ENCODE measurements at regions of chr2 and their contacts with region 1.

Region 1: DNA sequence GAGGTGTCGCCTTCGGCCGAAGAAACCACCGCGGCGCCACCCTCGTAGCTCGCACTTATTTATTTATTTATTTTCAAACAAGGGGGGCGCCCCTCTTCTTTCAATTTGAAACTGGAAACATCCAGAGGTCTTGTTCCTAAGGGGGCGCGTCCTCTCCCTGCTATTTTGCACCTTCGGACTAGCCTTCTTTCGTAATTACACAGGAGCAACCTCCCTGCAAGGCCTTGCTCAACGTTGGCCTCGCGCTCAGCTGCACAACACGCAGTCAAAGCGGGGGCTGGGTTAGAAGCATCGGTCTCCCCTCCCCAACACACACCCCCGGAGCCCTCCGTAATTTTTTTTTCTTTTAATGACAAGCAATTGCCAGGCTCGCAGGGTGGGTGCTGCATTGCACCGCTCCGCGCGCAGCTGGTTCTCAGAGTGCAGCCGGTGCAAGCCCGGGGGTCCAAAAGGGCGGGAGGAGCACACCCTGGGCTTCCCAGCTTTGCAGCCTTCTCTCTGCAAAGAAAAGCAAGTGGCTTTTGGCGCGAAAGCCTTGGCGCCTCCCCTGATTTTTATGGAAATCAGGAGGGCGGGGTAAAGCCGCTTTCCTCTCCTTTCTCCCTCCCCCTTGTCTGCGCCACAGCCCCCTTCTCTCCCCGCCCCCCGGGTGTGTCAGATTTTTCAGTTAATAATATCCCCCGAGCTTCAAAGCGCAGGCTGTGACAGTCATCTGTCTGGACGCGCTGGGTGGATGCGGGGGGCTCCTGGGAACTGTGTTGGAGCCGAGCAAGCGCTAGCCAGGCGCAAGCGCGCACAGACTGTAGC is at the start of gene MYCN:
- DNase-seq: peak; percentile 74 to 89
- H3K4me3 ChIP-seq: peak within 1 kb of the TSS; percentile 86 to 97 (median 94)
- H3K27ac ChIP-seq: peak within 1 kb of the TSS; percentile 80
- H3K4me1 ChIP-seq: peaks cover 6 to 23% (median 14%) of the 10 kb centered on the region in 4 experiments; a peak in 5 of 7 replicates
- H3K27me3 ChIP-seq: no peaks in the 10 kb centered on the region
- CTCF ChIP-seq: peak in 1 of 3 experiments; percentile 82; a peak in 2 of 4 replicates
- EP300 ChIP-seq: no peak
- POLR2A ChIP-seq: peak; percentile 59 to 91
- RAD21 ChIP-seq: peak; percentile 88 to 90
- total RNA-seq, gene MYCN: 137 and 142 TPM in 2 replicates

Region 2: DNA sequence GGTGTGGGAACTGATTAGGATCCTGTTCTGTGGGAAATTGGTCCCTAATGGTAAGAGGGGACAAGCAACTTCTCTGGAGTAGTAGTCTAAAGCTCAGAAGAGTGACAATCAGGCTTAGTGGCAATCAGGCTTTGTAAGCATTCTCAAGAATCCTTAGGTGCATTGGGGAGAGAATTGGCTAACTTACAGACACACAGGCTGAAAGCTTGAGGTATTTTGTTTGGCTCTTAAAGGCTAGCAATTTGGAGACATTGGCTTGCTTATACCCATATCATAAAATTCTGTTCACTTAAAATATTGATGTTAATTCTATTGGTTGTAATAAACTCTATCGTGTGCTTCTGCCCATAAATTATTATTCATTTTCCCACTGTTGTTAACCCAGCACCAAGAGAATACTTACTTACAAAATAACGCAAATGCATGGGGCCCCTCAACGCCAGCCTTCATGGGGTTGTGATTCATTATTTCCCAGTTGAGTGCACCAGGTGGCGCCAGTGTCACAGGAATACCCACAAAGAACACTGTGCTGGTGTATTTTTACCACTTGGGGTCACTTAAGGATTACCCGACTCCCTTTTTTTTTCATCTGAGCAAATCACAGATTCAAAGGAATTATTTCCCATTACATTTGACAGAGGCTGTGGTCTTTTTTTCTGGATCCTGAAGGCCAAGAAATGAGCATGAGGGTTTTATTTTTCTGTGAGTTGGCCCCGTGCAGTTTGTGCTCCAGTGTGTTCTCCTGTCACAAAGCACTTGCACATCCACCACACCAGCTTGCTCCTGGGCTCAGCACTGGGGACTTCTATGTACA is 302.9 kb before region 1 on chr2:
- CTCF ChIA-PET with region 1: interaction called, 18 read pairs
- POLR2A ChIA-PET with region 1: no interaction called
- DNase-seq: peak; percentile 31 to 80
- H3K4me3 ChIP-seq: no peak overlapping the region
- H3K27ac ChIP-seq: no peak overlapping the region
- H3K4me1 ChIP-seq: no peaks in the 10 kb centered on the region; a peak in 1 of 7 replicates
- H3K27me3 ChIP-seq: no peaks in the 10 kb centered on the region
- CTCF ChIP-seq: peak; percentile 68 to 99 (median 92)
- EP300 ChIP-seq: no peak
- POLR2A ChIP-seq: 0 out of 3 replicates have a peak, but pooled peaks of 1 of the 2 experiments have one; percentile 26
- RAD21 ChIP-seq: peak; percentile 100

Region 3: GRCh38 chr2:15927581-15928218 is 12.4 kb before region 1 on chr2:
- CTCF ChIA-PET with region 1: interaction called, 11 read pairs
- POLR2A ChIA-PET with region 1: interaction called, 8 read pairs
- DNase-seq: no peak
- H3K4me3 ChIP-seq: no peak overlapping the region
- H3K27ac ChIP-seq: no peak overlapping the region
- H3K4me1 ChIP-seq: peaks cover 0 to 3% (median under 1%) of the 10 kb centered on the region in 4 experiments; a peak in 1 of 7 replicates
- H3K27me3 ChIP-seq: no peaks in the 10 kb centered on the region
- CTCF ChIP-seq: no peak
- EP300 ChIP-seq: no peak
- POLR2A ChIP-seq: no peak
- RAD21 ChIP-seq: no peak

Region 4: DNA sequence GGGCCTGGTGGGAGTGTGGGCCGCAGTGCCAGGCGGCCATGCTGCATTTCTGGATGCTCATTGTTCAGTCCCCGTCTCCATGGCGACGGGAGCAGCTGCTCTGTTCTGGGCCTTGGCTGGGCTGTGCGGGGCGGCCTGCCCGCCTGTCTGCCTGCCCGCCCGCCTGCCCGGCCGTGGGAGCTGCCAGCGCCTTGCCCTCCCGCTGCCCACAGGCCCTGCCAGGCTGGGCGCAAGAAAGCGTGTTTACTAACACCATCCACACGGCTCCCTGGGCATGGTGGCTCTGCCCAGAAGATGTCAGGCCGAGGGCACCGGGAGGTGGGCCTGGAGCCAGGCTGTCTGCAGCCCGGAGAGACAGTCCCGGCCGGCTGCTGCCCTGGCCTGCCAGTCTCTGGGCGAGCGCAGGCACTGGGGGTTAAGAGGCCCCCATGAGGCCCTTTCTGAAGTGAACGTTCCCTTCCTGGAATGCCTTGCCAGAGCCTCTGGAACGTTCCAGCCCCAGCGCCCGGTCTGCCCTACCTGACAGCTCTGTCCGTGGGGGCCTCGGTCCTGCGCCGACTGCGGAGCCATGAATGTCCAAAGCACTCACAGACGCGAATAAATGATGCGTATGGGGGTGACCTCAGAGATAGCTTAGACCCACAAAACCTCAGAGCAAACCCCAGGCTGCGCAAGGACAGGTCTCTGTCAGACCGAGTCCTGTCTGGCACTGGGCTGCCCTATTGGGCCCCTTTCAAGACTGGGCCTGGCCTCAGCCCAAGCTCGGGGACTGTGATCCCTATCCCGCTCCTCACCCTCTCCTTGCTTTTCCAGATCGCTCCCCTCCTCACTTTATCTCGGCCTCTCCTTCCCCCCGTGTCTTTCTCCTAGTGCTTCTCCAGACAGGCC is 44.6 kb after region 1 on chr2:
- CTCF ChIA-PET with region 1: interaction called, 4 read pairs
- POLR2A ChIA-PET with region 1: interaction called, 19 read pairs
- DNase-seq: peak in 1 of 2 experiments; percentile 64
- H3K4me3 ChIP-seq: no peak overlapping the region
- H3K27ac ChIP-seq: no peak overlapping the region
- H3K4me1 ChIP-seq: peaks cover 2 to 17% (median 10%) of the 10 kb centered on the region in 4 experiments; a peak in 5 of 7 replicates
- H3K27me3 ChIP-seq: peaks cover 0 to 1% (median 0%) of the 10 kb centered on the region in 4 experiments; a peak in 2 of 7 replicates
- CTCF ChIP-seq: no peak
- EP300 ChIP-seq: no peak
- POLR2A ChIP-seq: no peak
- RAD21 ChIP-seq: no peak

Region 5: DNA sequence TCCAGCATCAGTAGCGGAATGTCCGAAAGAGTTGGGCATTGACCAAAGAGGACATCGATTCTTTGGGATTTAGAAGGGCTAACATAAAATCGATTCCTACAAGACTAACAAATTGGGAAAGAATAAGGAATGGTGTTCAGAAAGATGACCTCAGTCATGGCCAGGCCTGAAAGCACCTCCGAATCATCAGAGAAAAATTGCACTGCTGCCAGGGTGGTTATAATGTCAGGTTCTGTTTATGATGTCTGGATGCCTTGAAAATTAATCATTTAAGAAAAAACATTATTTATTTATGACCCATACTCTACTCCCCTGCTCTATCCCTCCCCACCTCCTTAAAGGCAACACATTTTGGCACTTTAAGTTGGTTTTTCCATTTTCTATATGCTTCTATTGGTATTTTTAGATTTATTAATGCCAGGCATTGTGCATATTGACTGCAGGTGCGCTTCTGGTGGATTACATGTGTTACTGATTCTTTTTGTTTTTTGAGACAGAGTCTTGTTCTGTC is 104.9 kb after region 1 on chr2:
- CTCF ChIA-PET with region 1: no interaction called
- POLR2A ChIA-PET with region 1: no interaction called
- DNase-seq: no peak
- H3K4me3 ChIP-seq: no peak overlapping the region
- H3K27ac ChIP-seq: no peak overlapping the region
- H3K4me1 ChIP-seq: peaks cover 0 to 4% (median under 1%) of the 10 kb centered on the region in 4 experiments; a peak in 3 of 7 replicates
- H3K27me3 ChIP-seq: no peaks in the 10 kb centered on the region; a peak in 1 of 7 replicates
- CTCF ChIP-seq: no peak
- EP300 ChIP-seq: no peak
- POLR2A ChIP-seq: no peak
- RAD21 ChIP-seq: no peak

Region 6: GRCh38 chr2:16105669-16106281 is 165.7 kb after region 1 on chr2:
- CTCF ChIA-PET with region 1: interaction called, 28 read pairs
- POLR2A ChIA-PET with region 1: interaction called, 46 read pairs
- DNase-seq: peak; percentile 83 to 97
- H3K4me3 ChIP-seq: peak overlapping the region; percentile 2 to 51 (median 27); a peak in 5 of 8 replicates
- H3K27ac ChIP-seq: peak overlapping the region; percentile 89
- H3K4me1 ChIP-seq: peaks cover 23 to 41% (median 33%) of the 10 kb centered on the region in 4 experiments
- H3K27me3 ChIP-seq: no peaks in the 10 kb centered on the region
- CTCF ChIP-seq: no peak
- EP300 ChIP-seq: peak in 1 of 2 experiments; percentile 83; a peak in 1 of 3 replicates
- POLR2A ChIP-seq: no peak
- RAD21 ChIP-seq: peak; percentile 20 to 31; a peak in 2 of 4 replicates

Region 7: DNA sequence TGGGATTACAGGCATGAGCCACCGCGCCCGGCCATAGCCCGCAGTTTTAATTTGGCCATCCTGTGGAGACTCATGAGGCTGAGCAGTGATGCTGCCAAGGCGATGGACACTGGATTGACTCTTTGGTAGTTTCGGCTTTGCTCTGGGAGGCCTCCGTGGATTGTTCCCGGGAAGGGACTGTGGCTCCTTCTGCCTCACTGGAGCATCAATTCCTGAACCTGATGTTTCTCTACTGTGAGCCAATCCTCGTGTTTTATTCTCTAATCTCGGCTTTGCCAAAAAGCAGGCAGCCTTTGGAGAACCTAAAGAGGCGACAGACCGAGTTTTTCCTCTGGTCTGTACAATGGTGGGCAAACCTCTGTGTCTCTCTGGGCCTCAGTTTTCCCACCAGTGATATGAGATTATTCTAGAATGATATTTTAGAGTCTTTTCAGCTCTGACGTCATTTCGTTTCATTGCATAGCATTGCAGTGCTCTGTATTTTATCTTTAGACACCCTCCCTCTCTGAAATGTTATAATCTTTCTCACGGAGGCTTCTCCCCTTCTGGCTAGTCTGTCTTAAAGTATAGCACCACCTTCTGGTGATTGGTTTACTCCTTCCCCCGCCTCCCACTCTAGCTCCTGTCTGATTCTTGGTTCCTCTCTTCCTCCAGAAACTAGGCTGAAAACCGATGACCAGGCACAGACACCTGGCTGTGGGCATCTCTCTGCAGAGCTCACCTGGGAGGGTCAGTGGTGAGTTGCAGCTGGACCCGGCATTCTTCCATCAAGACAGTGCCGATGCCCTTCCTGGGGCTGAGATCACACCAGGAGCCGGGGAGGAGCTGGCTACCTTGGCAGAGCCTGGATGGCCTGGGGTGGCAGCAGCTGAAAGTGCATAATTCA is 341.6 kb after region 1 on chr2:
- CTCF ChIA-PET with region 1: interaction called, 11 read pairs
- POLR2A ChIA-PET with region 1: interaction called, 3 read pairs
- DNase-seq: peak; percentile 27 to 57
- H3K4me3 ChIP-seq: no peak overlapping the region
- H3K27ac ChIP-seq: no peak overlapping the region
- H3K4me1 ChIP-seq: peaks cover 0 to 2% (median 0%) of the 10 kb centered on the region in 4 experiments; a peak in 2 of 7 replicates
- H3K27me3 ChIP-seq: no peaks in the 10 kb centered on the region
- CTCF ChIP-seq: peak; percentile 8 to 67 (median 59)
- EP300 ChIP-seq: no peak
- POLR2A ChIP-seq: no peak
- RAD21 ChIP-seq: peak; percentile 80 to 82